OCI-LY7 (cell line): ENCODE measurements at regions of chr3 and their contacts with region 1.

Region 1: GRCh38 chr3:6753536-6753935 is 107.4 kb upstream of the GRM7 start:
- DNase-seq: no peak
- H3K4me3 ChIP-seq: no peak overlapping the region
- H3K27ac ChIP-seq: no peak overlapping the region
- H3K4me1 ChIP-seq: no peaks in the 10 kb centered on the region
- CTCF ChIP-seq: no peak

Region 2: DNA sequence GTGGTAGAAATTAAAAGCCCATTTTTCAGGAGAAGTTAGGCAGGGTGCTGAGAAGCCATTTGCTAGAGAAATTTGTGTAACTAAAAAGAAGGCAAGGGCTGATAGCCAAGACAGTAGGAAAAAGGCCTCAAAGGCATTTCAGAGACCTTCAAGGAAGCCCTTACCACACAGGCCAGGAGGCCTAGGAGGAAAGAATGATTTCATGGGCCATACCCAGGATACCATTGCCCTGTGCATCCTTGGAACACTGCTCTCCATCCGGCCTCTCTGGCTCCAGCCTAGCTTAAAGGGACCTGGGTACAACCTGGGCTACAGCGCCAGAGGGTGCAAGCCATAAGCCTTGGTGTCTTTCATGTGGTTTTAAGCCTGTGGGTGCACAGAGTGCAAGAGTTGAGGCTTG is 86.2 kb before region 1 on chr3:
- CTCF ChIA-PET with region 1: no interaction called
- POLR2A ChIA-PET with region 1: no interaction called
- intact Hi-C with region 1: no loop called
- DNase-seq: no peak
- H3K4me3 ChIP-seq: no peak overlapping the region
- H3K27ac ChIP-seq: no peak overlapping the region
- H3K4me1 ChIP-seq: no peaks in the 10 kb centered on the region
- CTCF ChIP-seq: no peak

Region 3: DNA sequence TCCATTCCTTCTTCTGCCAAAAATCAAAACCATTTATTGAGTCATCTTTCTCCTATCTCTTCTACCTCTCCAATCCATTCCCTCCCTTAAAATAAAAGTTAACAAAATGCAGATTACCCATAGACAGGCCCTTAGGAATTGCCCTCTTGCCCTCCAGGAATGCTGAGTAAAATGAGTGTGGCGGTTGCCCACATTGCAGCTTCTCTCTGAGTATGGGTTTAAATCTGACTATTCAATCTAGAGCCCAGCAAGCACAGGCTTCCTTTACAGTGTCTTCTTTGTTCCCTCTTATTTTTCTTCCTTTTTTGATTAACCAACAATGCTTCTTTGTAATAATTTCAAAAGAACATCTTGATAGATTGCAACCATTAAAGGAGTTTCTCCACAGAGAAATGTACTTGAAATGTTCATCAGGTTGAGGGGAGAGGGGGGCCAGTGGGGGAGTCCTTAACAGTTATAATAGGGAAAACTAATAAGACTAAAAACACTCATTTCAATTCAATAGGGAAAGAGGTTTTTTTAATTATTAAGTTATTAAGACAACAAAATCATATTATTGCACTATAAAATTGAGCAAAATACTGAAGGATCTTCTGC is 1612.8 kb after region 1 on chr3:
- CTCF ChIA-PET with region 1: no interaction called
- POLR2A ChIA-PET with region 1: no interaction called
- intact Hi-C with region 1: loop called (anchors 10 kb)
- DNase-seq: no peak
- H3K4me3 ChIP-seq: no peak overlapping the region
- H3K27ac ChIP-seq: no peak overlapping the region
- H3K4me1 ChIP-seq: no peaks in the 10 kb centered on the region
- CTCF ChIP-seq: no peak